Sigmoid colon (tissue), 7 donors: ENCODE measurements at regions of chr2 and their contacts with region 1.

Region 1: GRCh38 chr2:237092920-237093781 is 7.5 kb downstream of the COPS8 start:
- DNase-seq: peak; percentile 88
- H3K4me3 ChIP-seq: no peak overlapping the region
- H3K27ac ChIP-seq: peak overlapping the region; percentile 68 to 82 (median 80)
- H3K4me1 ChIP-seq: peaks cover 0 to 57% (median 29%) of the 10 kb centered on the region in 4 donors
- H3K27me3 ChIP-seq: no peaks in the 10 kb centered on the region
- CTCF ChIP-seq: peak; percentile 55 to 81 (median 68)
- EP300 ChIP-seq: peak in 2 of 4 donors; percentile 37 to 51
- POLR2A ChIP-seq: no peak

Region 2: GRCh38 chr2:237181844-237182243 is 88.7 kb after region 1 on chr2:
- intact Hi-C with region 1: no loop called
- DNase-seq: peak; percentile 76
- H3K4me3 ChIP-seq: no peak overlapping the region
- H3K27ac ChIP-seq: peak overlapping the region in 3 of 4 donors; percentile 35 to 56 (median 48)
- H3K4me1 ChIP-seq: peaks cover 0 to 23% (median 9%) of the 10 kb centered on the region in 4 donors
- H3K27me3 ChIP-seq: no peaks in the 10 kb centered on the region
- CTCF ChIP-seq: no peak
- EP300 ChIP-seq: no peak
- POLR2A ChIP-seq: no peak

Region 3: DNA sequence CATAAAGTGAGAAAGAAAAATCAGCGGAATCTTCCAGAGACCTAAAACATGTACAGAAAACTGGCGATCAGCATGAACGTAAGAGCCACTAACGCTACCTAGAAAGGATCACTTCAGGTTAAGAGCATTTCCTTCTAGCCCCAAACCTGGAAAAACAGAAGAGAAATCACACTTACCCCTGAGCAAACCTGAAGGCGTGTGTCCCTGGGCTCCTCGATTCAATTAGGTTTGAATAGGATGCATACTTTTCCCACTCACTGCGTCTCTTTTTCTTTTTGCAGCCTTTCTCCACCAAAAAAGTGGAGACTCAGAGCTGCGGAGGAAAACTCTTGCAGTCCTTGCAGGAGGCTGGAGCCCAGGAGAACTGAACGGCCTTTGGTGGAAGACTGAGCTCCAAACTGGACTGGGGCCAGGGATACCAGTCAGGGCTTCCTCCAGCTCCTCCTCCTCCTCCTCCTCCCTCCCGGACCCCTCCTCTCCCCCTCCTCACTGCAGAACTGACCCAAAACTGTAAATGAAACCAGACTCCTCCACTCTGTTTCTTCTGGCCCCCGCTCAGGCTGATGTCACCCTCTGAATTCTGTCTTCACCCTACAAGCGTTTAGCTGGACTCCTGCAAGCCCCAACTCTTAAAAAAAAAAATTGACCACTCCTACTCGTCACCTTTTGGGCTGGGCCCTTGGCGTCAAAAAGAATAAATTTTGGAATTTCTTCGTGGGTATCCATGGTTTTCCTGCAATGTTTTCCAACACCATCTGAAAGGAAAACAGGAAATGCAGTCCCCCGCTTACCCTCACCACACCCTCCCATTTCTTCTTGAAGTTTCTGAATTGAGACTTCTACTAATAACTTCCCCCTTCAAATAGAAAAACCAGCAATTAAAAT is 320.9 kb after region 1 on chr2 and contains the start of gene COL6A3:
- intact Hi-C with region 1: loop called (anchors 1 kb)
- DNase-seq: peak; percentile 94
- H3K4me3 ChIP-seq: peak within 1 kb of the TSS; percentile 53 to 81 (median 74)
- H3K27ac ChIP-seq: peak within 1 kb of the TSS; percentile 84 to 96 (median 94)
- H3K4me1 ChIP-seq: peaks cover 0 to 19% (median 6%) of the 10 kb centered on the region in 4 donors
- H3K27me3 ChIP-seq: no peaks in the 10 kb centered on the region
- CTCF ChIP-seq: no peak
- EP300 ChIP-seq: no peak
- POLR2A ChIP-seq: peak; percentile 53 to 56
- total RNA-seq, gene COL6A3: 233 to 715 (median 381) TPM